ENCODE measurements at regions of chr15 and their contacts with region 1.

Region 1: GRCh38 chr15:91055548-91056331 is 33.3 kb upstream of the VPS33B start:
- DNase-seq: peak; percentile 85 to 95
- ATAC-seq: peak; percentile 94 to 96
- H3K4me3 ChIP-seq: peak overlapping the region; percentile 9
- H3K27ac ChIP-seq: no peak overlapping the region
- H3K4me1 ChIP-seq: no peaks in the 10 kb centered on the region
- CTCF ChIP-seq: peak; percentile 96
- EP300 ChIP-seq: no peak
- POLR2A ChIP-seq: no peak
- RAD21 ChIP-seq: peak; percentile 92 to 96

Region 2: GRCh38 chr15:91040856-91041255 is 14.9 kb before region 1 on chr15:
- CTCF ChIA-PET with region 1: interaction called, 35 read pairs
- POLR2A ChIA-PET with region 1: no interaction called
- DNase-seq: no peak
- ATAC-seq: no peak
- H3K4me3 ChIP-seq: no peak overlapping the region
- H3K27ac ChIP-seq: no peak overlapping the region
- H3K4me1 ChIP-seq: no peaks in the 10 kb centered on the region
- CTCF ChIP-seq: no peak
- EP300 ChIP-seq: no peak
- POLR2A ChIP-seq: no peak
- RAD21 ChIP-seq: no peak

Region 3: GRCh38 chr15:91182101-91182500 is 126.4 kb after region 1 on chr15:
- CTCF ChIA-PET with region 1: no interaction called
- POLR2A ChIA-PET with region 1: no interaction called
- DNase-seq: no peak
- ATAC-seq: no peak
- H3K4me3 ChIP-seq: no peak overlapping the region
- H3K27ac ChIP-seq: no peak overlapping the region
- H3K4me1 ChIP-seq: no peaks in the 10 kb centered on the region
- CTCF ChIP-seq: no peak
- EP300 ChIP-seq: no peak
- POLR2A ChIP-seq: no peak
- RAD21 ChIP-seq: no peak

Region 4: GRCh38 chr15:91214675-91215590 is 159.2 kb after region 1 on chr15:
- CTCF ChIA-PET with region 1: interaction called, 15 read pairs
- POLR2A ChIA-PET with region 1: no interaction called
- DNase-seq: no peak
- ATAC-seq: no peak
- H3K4me3 ChIP-seq: no peak overlapping the region
- H3K27ac ChIP-seq: no peak overlapping the region
- H3K4me1 ChIP-seq: no peaks in the 10 kb centered on the region
- CTCF ChIP-seq: no peak
- EP300 ChIP-seq: no peak
- POLR2A ChIP-seq: no peak
- RAD21 ChIP-seq: no peak

Region 5: GRCh38 chr15:91231703-91232372 is 176.1 kb after region 1 on chr15:
- CTCF ChIA-PET with region 1: interaction called, 59 read pairs
- POLR2A ChIA-PET with region 1: no interaction called
- DNase-seq: no peak
- ATAC-seq: no peak
- H3K4me3 ChIP-seq: no peak overlapping the region
- H3K27ac ChIP-seq: no peak overlapping the region
- H3K4me1 ChIP-seq: no peaks in the 10 kb centered on the region
- CTCF ChIP-seq: no peak
- EP300 ChIP-seq: no peak
- POLR2A ChIP-seq: no peak
- RAD21 ChIP-seq: no peak

Region 6: GRCh38 chr15:91271565-91272153 is 215.9 kb after region 1 on chr15:
- CTCF ChIA-PET with region 1: interaction called, 156 read pairs
- POLR2A ChIA-PET with region 1: interaction called, 8 read pairs
- DNase-seq: peak; percentile 51 to 76
- ATAC-seq: peak; percentile 86 to 90; a peak in 5 of 6 replicates
- H3K4me3 ChIP-seq: no peak overlapping the region
- H3K27ac ChIP-seq: no peak overlapping the region
- H3K4me1 ChIP-seq: no peaks in the 10 kb centered on the region
- CTCF ChIP-seq: peak; percentile 97
- EP300 ChIP-seq: no peak
- POLR2A ChIP-seq: no peak
- RAD21 ChIP-seq: peak; percentile 95 to 96

Region 7: GRCh38 chr15:91289324-91289723 is 233.6 kb after region 1 on chr15:
- CTCF ChIA-PET with region 1: interaction called, 12 read pairs
- POLR2A ChIA-PET with region 1: no interaction called
- DNase-seq: peak in 1 of 2 experiments; percentile 7
- ATAC-seq: peak in 1 of 2 experiments; percentile 48; a peak in 3 of 6 replicates
- H3K4me3 ChIP-seq: no peak overlapping the region
- H3K27ac ChIP-seq: no peak overlapping the region
- H3K4me1 ChIP-seq: no peaks in the 10 kb centered on the region
- CTCF ChIP-seq: no peak
- EP300 ChIP-seq: no peak
- POLR2A ChIP-seq: no peak
- RAD21 ChIP-seq: no peak

Measured in A549 (cell line).